Esophagus muscularis mucosa (tissue), 4 donors: ENCODE measurements at regions of chr4 and their contacts with region 1.

Region 1: GRCh38 chr4:139734875-139735380 is 69.3 kb downstream of the MGST2 start:
- DNase-seq: peak; percentile 95
- H3K4me3 ChIP-seq: peak overlapping the region; percentile 57 to 66 (median 60)
- H3K27ac ChIP-seq: peak overlapping the region; percentile 90 to 91 (median 90)
- H3K4me1 ChIP-seq: peaks cover 20 to 36% (median 32%) of the 10 kb centered on the region in 4 donors
- H3K27me3 ChIP-seq: no peaks in the 10 kb centered on the region
- CTCF ChIP-seq: peak; percentile 86 to 97 (median 92)
- EP300 ChIP-seq: no peak
- POLR2A ChIP-seq: no peak

Region 2: DNA sequence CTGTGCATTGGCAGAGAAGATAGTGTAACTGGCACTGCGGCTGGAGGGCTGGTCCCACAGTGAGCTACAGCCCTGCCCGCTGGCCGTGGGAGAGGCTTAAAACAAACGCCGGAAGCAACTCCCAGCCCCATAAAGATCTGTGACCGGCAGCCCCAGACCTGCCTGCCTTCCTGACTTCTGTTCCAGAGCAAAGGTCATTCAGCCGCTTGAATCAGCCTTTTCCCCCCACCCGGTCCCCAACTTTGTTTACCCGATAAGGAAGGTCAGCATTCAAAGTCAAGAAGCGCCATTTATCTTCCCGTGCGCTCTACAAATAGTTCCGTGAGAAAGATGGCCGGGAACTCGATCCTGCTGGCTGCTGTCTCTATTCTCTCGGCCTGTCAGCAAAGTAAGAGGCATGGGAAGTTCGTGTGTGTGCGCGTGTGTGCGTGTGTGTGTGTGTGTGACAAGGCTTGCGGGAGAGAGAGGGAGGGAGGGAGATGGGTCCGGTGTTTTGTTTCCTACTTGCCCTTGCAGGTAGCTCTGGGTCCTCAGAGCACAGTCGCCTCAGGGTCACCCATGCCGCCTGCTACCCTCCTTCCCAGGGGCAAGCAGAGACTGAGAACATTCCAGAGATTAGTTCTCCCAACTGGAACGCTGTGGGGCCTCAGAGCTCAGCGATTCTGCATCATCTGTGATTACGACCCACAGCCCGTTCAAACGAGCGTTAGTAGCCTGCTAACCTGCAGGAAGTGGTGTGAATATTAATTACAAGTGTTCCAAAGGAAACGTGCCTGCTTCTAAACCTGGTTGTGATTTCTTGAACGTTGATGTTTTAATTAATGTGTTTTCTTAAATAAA is 69.0 kb before region 1 on chr4 and contains the start of gene MGST2:
- intact Hi-C with region 1: loop called (anchors 5 kb)
- DNase-seq: no peak
- H3K4me3 ChIP-seq: peak within 1 kb of the TSS; percentile 57 to 68 (median 62)
- H3K27ac ChIP-seq: peak within 1 kb of the TSS; percentile 83 to 91 (median 86)
- H3K4me1 ChIP-seq: peaks cover 23 to 43% (median 31%) of the 10 kb centered on the region in 4 donors
- H3K27me3 ChIP-seq: no peaks in the 10 kb centered on the region
- CTCF ChIP-seq: no peak
- EP300 ChIP-seq: no peak
- POLR2A ChIP-seq: no peak
- total RNA-seq, gene MGST2: 28.7 to 39.7 (median 34.2) TPM

Region 3: GRCh38 chr4:139692309-139693012 is 42.5 kb before region 1 on chr4:
- intact Hi-C with region 1: no loop called
- DNase-seq: no peak
- H3K4me3 ChIP-seq: no peak overlapping the region
- H3K27ac ChIP-seq: no peak overlapping the region
- H3K4me1 ChIP-seq: peaks cover 6 to 12% (median 8%) of the 10 kb centered on the region in 4 donors
- H3K27me3 ChIP-seq: no peaks in the 10 kb centered on the region
- CTCF ChIP-seq: peak in 1 of 3 experiments; percentile 18
- EP300 ChIP-seq: no peak
- POLR2A ChIP-seq: no peak

Region 4: GRCh38 chr4:140004549-140004895 is 269.6 kb after region 1 on chr4:
- intact Hi-C with region 1: loop called (anchors 10 kb)
- DNase-seq: no peak
- H3K4me3 ChIP-seq: peak overlapping the region; percentile 46 to 58 (median 52)
- H3K27ac ChIP-seq: peak overlapping the region; percentile 50 to 68 (median 66)
- H3K4me1 ChIP-seq: peaks cover 17 to 32% (median 22%) of the 10 kb centered on the region in 4 donors
- H3K27me3 ChIP-seq: no peaks in the 10 kb centered on the region
- CTCF ChIP-seq: no peak
- EP300 ChIP-seq: no peak
- POLR2A ChIP-seq: no peak

Region 5: GRCh38 chr4:140049024-140049848 is 314.3 kb after region 1 on chr4:
- intact Hi-C with region 1: loop called (anchors 5 kb)
- DNase-seq: no peak
- H3K4me3 ChIP-seq: peak overlapping the region; percentile 45 to 61 (median 53)
- H3K27ac ChIP-seq: peak overlapping the region; percentile 74 to 82 (median 76)
- H3K4me1 ChIP-seq: peaks cover 25 to 46% (median 44%) of the 10 kb centered on the region in 4 donors
- H3K27me3 ChIP-seq: no peaks in the 10 kb centered on the region
- CTCF ChIP-seq: peak; percentile 11 to 51 (median 43)
- EP300 ChIP-seq: no peak
- POLR2A ChIP-seq: no peak

Region 6: DNA sequence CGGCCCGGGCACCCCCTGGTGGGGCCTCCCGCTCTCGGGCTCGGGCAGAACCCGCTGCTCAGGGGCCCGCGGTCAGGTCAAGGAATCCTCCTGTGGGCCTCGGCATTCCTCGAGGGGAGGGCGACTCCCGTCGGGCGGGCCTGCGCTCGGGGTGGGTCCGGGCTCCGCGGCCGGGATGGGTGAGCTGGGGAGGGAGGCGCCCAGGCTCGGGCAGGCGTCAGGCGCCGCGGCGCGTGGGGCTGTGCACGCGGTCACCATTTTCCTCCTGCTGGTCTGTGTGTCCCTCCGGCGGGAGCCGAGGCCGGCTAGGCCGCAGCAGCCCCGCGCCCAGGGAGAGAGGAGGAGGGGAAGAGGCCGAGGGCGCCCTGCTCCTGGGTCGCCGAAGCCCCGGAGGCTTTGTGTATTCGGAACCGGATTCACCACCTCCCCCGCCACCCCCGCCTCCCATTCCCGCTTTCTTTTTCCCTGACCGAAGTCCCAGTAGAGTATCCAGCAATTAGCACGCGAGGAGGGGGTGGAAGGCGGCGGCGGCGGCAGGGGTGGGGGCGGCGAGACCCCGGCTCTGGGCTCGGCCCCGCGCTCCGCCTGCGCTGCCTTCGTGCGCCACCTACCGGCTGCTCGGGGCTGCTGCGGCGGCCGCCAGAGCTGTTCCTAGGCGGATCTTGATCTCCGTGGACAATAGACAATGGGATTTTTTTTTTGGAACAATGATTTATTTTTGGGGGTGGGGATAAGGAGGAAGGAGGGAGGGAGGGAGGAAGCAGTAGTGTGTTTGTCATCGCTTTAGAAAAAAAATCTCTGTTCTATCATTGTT is 518.0 kb after region 1 on chr4:
- intact Hi-C with region 1: loop called (anchors 2 kb)
- DNase-seq: peak; percentile 94
- H3K4me3 ChIP-seq: peak overlapping the region; percentile 65 to 80 (median 76)
- H3K27ac ChIP-seq: peak overlapping the region; percentile 86 to 96 (median 90)
- H3K4me1 ChIP-seq: peaks cover 8 to 62% (median 51%) of the 10 kb centered on the region in 4 donors
- H3K27me3 ChIP-seq: no peaks in the 10 kb centered on the region
- CTCF ChIP-seq: peak; percentile 90 to 97 (median 97)
- EP300 ChIP-seq: no peak
- POLR2A ChIP-seq: no peak

Region 7: GRCh38 chr4:140326395-140326993 is 591.6 kb after region 1 on chr4:
- intact Hi-C with region 1: loop called (anchors 10 kb)
- DNase-seq: no peak
- H3K4me3 ChIP-seq: no peak overlapping the region
- H3K27ac ChIP-seq: no peak overlapping the region
- H3K4me1 ChIP-seq: no peaks in the 10 kb centered on the region
- H3K27me3 ChIP-seq: no peaks in the 10 kb centered on the region
- CTCF ChIP-seq: peak; percentile 60 to 79 (median 74)
- EP300 ChIP-seq: no peak
- POLR2A ChIP-seq: no peak